ENCODE measurements at regions of chr3 and their contacts with region 1.

Region 1: DNA sequence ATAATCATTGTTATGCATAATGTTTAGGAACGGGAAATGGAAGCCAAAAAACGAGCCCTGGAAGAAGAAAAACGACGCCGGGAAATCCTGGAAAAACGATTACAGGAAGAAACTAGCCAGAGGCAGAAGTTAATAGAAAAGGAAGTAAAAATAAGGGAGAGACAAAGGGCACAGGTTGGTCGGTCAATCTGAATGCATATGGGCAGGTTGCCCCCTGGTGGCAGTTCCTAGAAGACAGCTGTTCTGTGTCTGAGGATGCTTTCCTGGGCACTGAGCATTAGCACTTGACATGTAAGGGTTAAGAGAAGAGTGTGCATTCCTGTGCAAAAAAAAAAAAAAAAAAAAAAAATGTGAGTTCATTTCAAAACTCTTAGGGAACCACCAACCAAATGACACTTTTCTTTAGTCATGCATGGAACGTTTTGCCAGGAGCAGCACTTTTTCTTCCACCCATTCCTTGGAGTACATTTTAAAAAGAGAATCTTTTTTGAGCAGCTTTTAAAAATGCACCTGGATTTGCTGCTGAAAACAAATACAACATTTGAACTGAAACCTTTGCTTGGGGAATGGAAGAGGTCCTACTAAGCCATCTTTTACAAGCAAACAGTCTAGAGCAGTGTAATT is 11.1 kb upstream of the ABHD10 start:
- H3K4me3 Mint-ChIP-seq: no peak overlapping the region
- H3K27ac Mint-ChIP-seq: peak overlapping the region; percentile 47
- H3K4me1 Mint-ChIP-seq: peaks cover 11% of the 10 kb centered on the region
- H3K27me3 Mint-ChIP-seq: no peaks in the 10 kb centered on the region

Region 2: DNA sequence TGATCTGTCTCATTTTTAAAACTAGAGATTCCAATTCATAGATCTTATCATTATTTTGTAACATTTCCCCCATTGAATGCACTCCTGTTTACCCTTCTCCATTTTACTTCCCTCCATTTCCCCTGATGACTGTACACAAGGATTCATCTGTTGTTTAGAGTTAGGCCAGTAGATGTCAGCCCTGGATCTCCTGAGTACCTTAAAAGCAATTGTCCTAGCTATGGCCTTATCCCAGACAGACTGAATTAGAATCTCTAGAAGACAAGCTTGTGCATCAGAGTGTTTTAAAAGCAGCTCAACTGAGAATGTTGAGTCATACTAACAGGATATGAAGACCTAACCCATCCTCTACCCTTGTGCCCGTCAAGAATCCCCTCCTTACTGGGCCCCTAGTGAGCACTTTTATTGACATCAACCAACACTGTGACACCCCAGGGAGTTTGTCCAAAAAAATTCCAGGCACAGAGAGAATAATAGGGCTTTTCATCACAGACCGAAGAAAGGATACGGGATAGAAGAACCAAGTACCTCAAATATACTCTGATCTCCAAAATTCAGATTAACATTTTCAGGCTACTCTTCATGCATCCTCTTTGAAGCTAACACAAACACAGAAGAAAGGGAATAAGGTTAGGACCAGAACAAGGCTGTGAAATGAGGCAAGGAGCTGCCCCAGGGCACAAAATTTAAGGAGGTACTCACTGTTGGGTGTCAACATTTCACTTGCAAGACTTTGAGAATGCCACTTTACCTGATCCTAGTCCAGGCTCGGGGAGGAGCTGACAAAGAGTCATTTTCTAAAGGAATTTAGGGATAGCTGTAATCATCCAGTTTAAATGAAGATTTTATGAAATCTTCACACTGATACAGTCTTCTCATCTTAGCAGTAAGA is 389.7 kb before region 1 on chr3:
- intact Hi-C with region 1: loop called (anchors 5 kb)
- H3K4me3 Mint-ChIP-seq: no peak overlapping the region
- H3K27ac Mint-ChIP-seq: no peak overlapping the region
- H3K4me1 Mint-ChIP-seq: peaks cover 7% of the 10 kb centered on the region
- H3K27me3 Mint-ChIP-seq: no peaks in the 10 kb centered on the region

Region 3: GRCh38 chr3:111668912-111669488 is 298.8 kb before region 1 on chr3:
- intact Hi-C with region 1: loop called (anchors 1 kb)
- H3K4me3 Mint-ChIP-seq: no peak overlapping the region
- H3K27ac Mint-ChIP-seq: no peak overlapping the region
- H3K4me1 Mint-ChIP-seq: peaks cover 20% of the 10 kb centered on the region
- H3K27me3 Mint-ChIP-seq: peaks cover 14% of the 10 kb centered on the region

Region 4: GRCh38 chr3:111717601-111718000 is 250.2 kb before region 1 on chr3:
- intact Hi-C with region 1: loop called (anchors 1 kb)
- H3K4me3 Mint-ChIP-seq: no peak overlapping the region
- H3K27ac Mint-ChIP-seq: no peak overlapping the region
- H3K4me1 Mint-ChIP-seq: peaks cover 7% of the 10 kb centered on the region
- H3K27me3 Mint-ChIP-seq: no peaks in the 10 kb centered on the region

Region 5: DNA sequence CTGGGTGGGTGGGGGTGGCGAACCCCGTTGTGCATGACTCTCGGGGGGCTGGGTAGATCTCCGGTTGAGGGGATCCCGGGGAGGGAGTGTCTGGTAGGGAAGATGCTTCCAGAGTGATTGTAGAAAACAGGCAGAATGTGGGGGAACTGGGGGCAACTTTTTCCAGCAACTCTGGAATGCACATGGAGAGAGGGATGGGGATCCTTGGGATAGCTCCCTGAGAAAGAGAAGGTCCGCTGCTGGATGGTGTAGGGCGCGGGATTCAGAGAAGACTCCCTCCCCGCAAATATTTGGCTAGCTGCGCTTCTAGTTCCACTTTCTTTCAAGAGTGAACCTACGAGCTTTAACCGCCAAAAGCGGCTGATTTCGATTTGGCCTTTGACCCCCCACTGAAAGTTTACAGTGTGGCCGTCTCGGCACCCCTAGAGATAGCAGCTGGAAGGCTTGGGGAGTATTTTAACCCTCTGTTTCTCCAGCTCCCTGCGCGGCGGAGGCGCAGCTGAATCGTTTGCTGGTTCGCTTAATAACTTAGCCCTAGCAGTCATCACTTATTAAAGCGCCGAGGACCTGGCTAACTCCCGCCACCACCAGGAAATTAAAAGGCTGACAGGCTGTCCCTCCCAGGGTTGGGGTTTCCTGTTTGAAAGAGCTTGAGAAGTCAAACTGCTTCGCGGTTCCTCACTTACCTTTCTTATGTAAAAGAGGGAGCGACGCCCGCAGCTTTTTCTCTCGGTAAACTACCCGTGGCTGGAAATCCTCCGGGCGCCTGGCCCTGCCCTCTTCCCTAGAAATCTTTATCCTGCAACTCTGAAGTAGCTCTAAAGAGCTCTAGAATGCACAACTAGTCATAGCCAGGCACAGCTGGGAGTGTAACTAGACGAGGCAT is 107.5 kb before region 1 on chr3:
- intact Hi-C with region 1: loop called (anchors 5 kb)
- H3K4me3 Mint-ChIP-seq: peak overlapping the region; percentile 72
- H3K27ac Mint-ChIP-seq: peak overlapping the region; percentile 16
- H3K4me1 Mint-ChIP-seq: peaks cover 22% of the 10 kb centered on the region
- H3K27me3 Mint-ChIP-seq: peaks cover 54% of the 10 kb centered on the region

Region 6: DNA sequence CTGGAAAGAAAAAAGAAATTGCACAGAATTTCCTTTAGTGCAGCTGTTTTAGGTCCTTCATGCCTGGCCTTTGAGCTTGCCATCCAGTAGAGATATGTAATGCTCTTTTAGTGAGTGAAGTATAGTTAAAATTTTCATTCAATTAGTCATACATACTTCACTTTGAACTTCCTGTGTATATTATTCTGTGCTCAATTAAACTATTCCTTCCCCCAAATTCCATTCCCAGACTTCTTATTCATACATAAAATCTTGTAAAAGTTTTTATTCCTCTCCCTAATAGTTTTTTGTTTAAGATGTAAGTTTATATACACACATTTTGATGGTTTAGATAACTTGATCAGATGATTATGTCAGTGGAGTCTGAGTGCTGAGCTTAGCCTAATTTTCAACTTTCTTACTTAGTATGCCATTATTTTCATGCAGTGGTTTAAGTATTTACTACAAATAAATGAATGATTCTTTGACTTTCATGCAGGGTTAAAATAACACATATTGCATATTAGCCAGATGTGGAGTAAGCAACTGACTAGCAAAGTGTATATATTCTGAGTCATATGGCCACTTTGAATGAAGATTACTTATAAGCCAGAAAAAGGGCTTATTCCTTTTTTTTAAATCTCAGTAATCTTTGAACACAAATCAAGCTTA is 31.4 kb before region 1 on chr3:
- intact Hi-C with region 1: no loop called
- H3K4me3 Mint-ChIP-seq: no peak overlapping the region
- H3K27ac Mint-ChIP-seq: no peak overlapping the region
- H3K4me1 Mint-ChIP-seq: no peaks in the 10 kb centered on the region
- H3K27me3 Mint-ChIP-seq: peaks cover 1% of the 10 kb centered on the region

Measured in dendritic cell treated with granulocyte-macrophage colony-stimulating factor and Interleukin-4, amounts not matched to agents 40 ng/mL and 50 ng/mL, for 4 days (primary cell).